ENCODE measurements at regions of chr11 and their contacts with region 1.

Region 1: DNA sequence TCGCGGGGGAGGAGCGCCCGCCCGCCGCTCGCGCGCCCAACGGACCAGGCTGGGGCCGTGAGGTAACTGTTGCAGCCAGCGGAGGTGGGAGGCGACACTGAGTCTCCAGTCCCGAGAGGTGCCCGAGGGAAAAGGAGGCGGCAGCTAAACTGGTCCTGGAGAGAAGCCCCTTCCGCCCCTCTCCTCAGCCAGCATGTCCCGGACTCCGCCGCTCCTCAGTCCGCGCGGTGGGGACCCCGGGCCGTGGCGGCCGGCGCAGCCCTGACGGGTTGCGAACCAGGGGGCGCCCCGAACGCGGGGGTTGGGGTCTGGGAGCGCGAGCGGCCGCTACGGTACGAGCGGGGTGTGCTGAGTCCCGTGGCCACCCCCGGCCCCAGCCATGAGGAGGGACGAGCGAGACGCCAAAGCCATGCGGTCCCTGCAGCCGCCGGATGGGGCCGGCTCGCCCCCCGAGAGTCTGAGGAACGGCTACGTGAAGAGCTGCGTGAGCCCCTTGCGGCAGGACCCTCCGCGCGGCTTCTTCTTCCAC is at the start of gene PDE3B:
- DNase-seq: peak; percentile 91
- ATAC-seq: peak; percentile 78
- H3K4me3 Mint-ChIP-seq: peak within 1 kb of the TSS; percentile 85
- H3K27ac Mint-ChIP-seq: peak within 1 kb of the TSS; percentile 89
- H3K4me1 Mint-ChIP-seq: peaks cover 46% of the 10 kb centered on the region
- H3K27me3 Mint-ChIP-seq: no peaks in the 10 kb centered on the region
- total RNA-seq, gene PDE3B: 81.3 to 92.2 TPM

Region 2: GRCh38 chr11:14519917-14520746 is 123.6 kb before region 1 on chr11 and contains the start of gene PSMA1:
- CTCF ChIA-PET with region 1: interaction called, 16 read pairs
- DNase-seq: peak; percentile 98
- ATAC-seq: peak; percentile 93
- H3K4me3 Mint-ChIP-seq: peak within 1 kb of the TSS; percentile 90
- H3K27ac Mint-ChIP-seq: peak within 1 kb of the TSS; percentile 95
- H3K4me1 Mint-ChIP-seq: peaks cover 31% of the 10 kb centered on the region
- H3K27me3 Mint-ChIP-seq: no peaks in the 10 kb centered on the region
- total RNA-seq, gene PSMA1: 222 to 268 TPM

Region 3: DNA sequence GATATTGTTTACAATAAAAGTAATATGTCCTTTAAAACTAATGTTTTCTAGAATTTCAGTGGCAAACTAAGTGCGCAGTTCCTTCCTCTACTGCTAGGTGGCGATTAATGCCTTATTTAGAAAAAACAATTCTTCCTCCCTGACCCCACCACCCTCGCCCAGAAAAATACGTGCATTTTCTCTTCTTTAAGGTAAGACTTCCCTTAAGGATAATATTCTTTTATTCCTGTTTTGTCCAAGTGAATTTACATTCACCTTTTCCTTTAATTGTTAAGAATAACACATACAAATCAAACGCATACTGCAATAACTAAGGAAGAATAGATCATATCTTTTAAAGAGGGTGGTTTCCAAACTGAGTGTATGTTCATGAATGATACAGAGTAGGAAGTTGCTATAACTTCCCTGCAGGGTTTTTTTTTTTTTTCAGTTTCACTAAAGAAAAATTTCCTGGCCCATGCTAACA is 106.6 kb before region 1 on chr11:
- CTCF ChIA-PET with region 1: interaction called, 14 read pairs
- DNase-seq: peak; percentile 65
- ATAC-seq: peak; percentile 77
- H3K4me3 Mint-ChIP-seq: peak overlapping the region; percentile 47
- H3K27ac Mint-ChIP-seq: peak overlapping the region; percentile 79
- H3K4me1 Mint-ChIP-seq: peaks cover 36% of the 10 kb centered on the region
- H3K27me3 Mint-ChIP-seq: no peaks in the 10 kb centered on the region

Region 4: GRCh38 chr11:14578541-14578956 is 65.2 kb before region 1 on chr11:
- CTCF ChIA-PET with region 1: interaction called, 21 read pairs
- DNase-seq: peak; percentile 87
- ATAC-seq: peak; percentile 93
- H3K4me3 Mint-ChIP-seq: peak overlapping the region; percentile 55
- H3K27ac Mint-ChIP-seq: peak overlapping the region; percentile 96
- H3K4me1 Mint-ChIP-seq: peaks cover 53% of the 10 kb centered on the region
- H3K27me3 Mint-ChIP-seq: no peaks in the 10 kb centered on the region

Region 5: DNA sequence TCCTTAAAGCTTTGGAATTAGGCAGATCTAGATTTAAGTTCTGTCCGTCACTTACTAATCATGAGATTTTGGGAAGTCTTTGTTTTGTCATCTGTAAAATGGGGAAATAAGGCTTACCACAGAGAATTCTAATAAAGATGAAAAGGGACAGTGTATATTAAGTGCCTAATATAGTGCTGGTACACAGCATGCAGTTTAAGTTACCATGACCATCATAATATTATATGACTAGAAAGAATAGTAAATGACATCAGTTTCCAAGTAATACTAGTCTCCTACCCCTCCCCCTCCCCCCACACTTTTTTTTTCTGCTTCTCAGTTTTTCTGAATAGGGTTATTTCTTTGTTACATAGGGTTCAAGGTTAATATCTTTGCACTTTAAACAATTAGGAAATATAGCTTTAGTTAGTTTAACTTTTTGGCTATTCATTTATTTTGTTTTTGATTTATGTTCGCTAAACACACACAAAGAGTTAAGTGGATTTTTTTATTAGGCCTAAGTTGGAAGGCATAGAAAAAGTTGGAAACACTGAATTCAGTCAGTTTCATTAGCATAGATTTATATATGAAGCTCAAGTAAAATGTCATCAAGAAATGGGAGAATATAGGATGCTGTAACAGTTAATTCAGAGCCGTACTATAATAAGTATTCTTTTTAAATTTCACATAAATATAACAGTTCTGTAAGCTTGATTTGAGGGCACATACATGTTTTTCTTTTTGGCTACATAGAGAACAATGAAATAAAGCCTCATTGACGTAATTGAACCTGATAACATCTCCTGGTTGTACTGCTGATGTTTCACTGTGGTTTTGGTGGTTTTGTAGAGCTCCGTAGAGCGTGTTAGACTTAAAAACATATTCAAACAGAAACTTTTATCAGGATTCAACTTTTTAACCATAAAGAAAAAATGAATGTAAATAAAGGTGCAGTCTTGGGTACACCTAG is 121.1 kb after region 1 on chr11:
- CTCF ChIA-PET with region 1: interaction called, 18 read pairs
- DNase-seq: peak; percentile 73
- ATAC-seq: peak; percentile 80
- H3K4me3 Mint-ChIP-seq: peak overlapping the region; percentile 50
- H3K27ac Mint-ChIP-seq: no peak overlapping the region
- H3K4me1 Mint-ChIP-seq: peaks cover 46% of the 10 kb centered on the region
- H3K27me3 Mint-ChIP-seq: no peaks in the 10 kb centered on the region

Measured in activated CD8-positive, alpha-beta memory T cell treated with anti-CD3 and anti-CD28 coated beads, Interleukin-2, amount 10 ng/mL, durations not matched to agents 7 days and 5 days (primary cell).